Naive thymus-derived CD4-positive, alpha-beta T cell (primary cell): ENCODE measurements at regions of chr11 and their contacts with region 1.

Region 1: GRCh38 chr11:76444384-76445123 is at the start of gene EMSY:
- DNase-seq: peak; percentile 73 to 95 (median 92)
- ATAC-seq: peak; percentile 96
- H3K4me3 ChIP-seq: peak within 1 kb of the TSS; percentile 95
- H3K4me3 Mint-ChIP-seq: peak within 1 kb of the TSS; percentile 91 to 99 (median 96)
- H3K27ac ChIP-seq: peak within 1 kb of the TSS; percentile 92
- H3K27ac Mint-ChIP-seq: peak within 1 kb of the TSS; percentile 91 to 98 (median 97)
- H3K4me1 ChIP-seq: peaks cover 12 to 19% of the 10 kb centered on the region in 2 donors
- H3K4me1 Mint-ChIP-seq: peaks cover 29 to 58% (median 44%) of the 10 kb centered on the region in 7 donors
- H3K27me3 ChIP-seq: no peaks in the 10 kb centered on the region
- H3K27me3 Mint-ChIP-seq: no peaks in the 10 kb centered on the region
- total RNA-seq, gene EMSY: 35.5 to 49.0 (median 40.0) TPM

Region 2: GRCh38 chr11:74592441-74593362 is 1851.9 kb before region 1 on chr11 and contains the start of gene POLD3:
- CTCF ChIA-PET with region 1: no interaction called
- POLR2A ChIA-PET with region 1: no interaction called
- intact Hi-C with region 1: loop called in 1 of 2 experiments (anchors 10 kb)
- DNase-seq: peak; percentile 83 to 97 (median 94)
- ATAC-seq: peak; percentile 99
- H3K4me3 ChIP-seq: peak within 1 kb of the TSS; percentile 98
- H3K4me3 Mint-ChIP-seq: peak within 1 kb of the TSS; percentile 90 to 100 (median 92)
- H3K27ac ChIP-seq: peak within 1 kb of the TSS; percentile 96
- H3K27ac Mint-ChIP-seq: peak within 1 kb of the TSS; percentile 90 to 99 (median 95)
- H3K4me1 ChIP-seq: peaks cover 9% of the 10 kb centered on the region in 2 donors
- H3K4me1 Mint-ChIP-seq: peaks cover 7 to 33% (median 27%) of the 10 kb centered on the region in 7 donors
- H3K27me3 ChIP-seq: no peaks in the 10 kb centered on the region
- H3K27me3 Mint-ChIP-seq: peaks cover 0 to 5% (median 0%) of the 10 kb centered on the region in 5 donors
- total RNA-seq, gene POLD3: 8.0 to 40.8 (median 14.7) TPM

Region 3: DNA sequence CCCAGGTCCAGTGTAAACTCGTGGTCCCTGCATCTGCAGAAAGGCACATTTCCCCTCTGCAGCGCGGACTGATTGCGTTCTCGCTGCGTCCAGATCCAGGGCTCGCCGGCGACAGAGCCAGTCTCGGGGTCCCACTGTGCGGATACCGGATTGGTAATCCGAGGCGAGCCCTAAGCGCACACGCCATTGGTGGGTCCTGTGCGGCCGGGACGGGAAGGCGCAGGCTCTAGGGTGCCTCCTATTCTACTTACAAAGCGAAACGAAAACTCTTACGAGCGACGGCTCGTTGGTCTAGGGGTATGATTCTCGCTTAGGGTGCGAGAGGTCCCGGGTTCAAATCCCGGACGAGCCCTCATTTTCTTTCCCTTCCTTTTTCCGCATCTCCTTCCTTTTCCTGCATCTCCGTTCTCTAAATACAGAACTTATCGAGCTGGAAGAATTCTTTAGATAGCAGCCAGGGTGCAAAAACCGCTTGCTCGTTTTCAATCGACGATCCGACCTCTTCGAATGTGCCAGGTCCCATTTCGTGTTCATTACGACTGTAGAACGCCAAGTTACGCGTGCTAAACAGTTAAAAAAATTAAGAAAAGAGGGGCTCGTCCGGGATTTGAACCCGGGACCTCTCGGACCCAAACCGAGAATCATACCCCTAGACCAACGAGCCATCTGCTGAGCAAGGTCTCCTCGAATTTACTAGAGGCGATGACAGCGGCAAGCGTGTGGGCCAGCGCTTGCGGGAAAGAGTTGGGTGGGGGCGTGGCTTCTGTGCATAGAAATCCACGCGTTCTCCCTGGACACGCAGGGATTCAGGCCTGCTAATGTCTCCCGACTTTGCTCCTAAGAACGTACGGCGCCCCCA is 209.1 kb before region 1 on chr11:
- CTCF ChIA-PET with region 1: no interaction called
- POLR2A ChIA-PET with region 1: no interaction called
- intact Hi-C with region 1: loop called (anchors 1 to 2 kb)
- DNase-seq: peak; percentile 79 to 95 (median 92)
- ATAC-seq: peak; percentile 87
- H3K4me3 ChIP-seq: peak overlapping the region; percentile 98
- H3K4me3 Mint-ChIP-seq: peak overlapping the region; percentile 82 to 94 (median 91)
- H3K27ac ChIP-seq: peak overlapping the region; percentile 57
- H3K27ac Mint-ChIP-seq: peak overlapping the region; percentile 89 to 99 (median 96)
- H3K4me1 ChIP-seq: peaks cover 26 to 40% of the 10 kb centered on the region in 2 donors
- H3K4me1 Mint-ChIP-seq: peaks cover 16 to 65% (median 55%) of the 10 kb centered on the region in 7 donors
- H3K27me3 ChIP-seq: no peaks in the 10 kb centered on the region
- H3K27me3 Mint-ChIP-seq: peaks cover 0 to 30% (median 0%) of the 10 kb centered on the region in 5 donors

Region 4: DNA sequence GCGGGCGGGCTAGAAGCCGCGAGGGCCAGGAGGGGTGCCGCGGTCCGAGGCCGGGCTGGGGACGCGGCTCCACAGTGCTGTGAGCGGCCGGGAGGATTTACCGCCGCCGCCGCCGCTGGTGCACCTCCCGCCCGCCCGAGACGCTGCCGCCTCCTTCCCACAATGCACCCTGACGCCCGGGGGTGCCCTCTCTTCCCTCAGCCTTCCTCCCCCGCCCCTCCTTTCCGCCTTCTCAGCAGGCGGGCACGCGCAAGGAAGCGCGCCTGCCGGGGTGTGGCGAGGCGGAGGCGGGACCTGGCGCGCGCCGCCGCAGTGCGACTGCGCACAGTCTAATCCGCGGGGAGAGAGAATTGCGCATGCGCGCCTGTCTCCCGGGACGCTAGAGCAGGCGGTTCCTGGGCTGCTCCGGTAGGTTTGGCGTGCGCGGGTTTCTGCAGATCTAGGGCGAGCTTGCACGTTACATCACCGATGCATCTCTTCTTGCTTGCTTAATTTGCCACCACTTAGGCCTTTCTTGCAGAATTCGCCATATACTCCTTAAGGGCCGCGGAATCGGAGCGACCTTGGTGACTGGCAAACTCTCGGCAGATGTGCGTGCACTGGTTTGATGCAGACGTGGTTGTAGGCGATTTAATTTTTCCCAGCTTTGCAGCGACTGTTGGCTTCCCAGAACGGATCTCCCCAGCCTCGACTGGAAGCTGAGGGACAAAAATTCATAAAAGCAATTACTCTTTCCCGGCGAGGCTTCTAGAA is 63.4 kb before region 1 on chr11 and contains the starts of genes GVQW3 and THAP12:
- CTCF ChIA-PET with region 1: no interaction called
- POLR2A ChIA-PET with region 1: interaction called, 8 read pairs
- intact Hi-C with region 1: loop called (anchors 1 kb)
- DNase-seq: peak; percentile 96 to 99 (median 98)
- ATAC-seq: peak; percentile 96
- H3K4me3 ChIP-seq: peak within 1 kb of the TSS; percentile 86
- H3K4me3 Mint-ChIP-seq: peak within 1 kb of the TSS; percentile 92 to 98 (median 97)
- H3K27ac ChIP-seq: peak within 1 kb of the TSS; percentile 72
- H3K27ac Mint-ChIP-seq: peak within 1 kb of the TSS; percentile 75 to 98 (median 92)
- H3K4me1 ChIP-seq: peaks cover 22 to 43% of the 10 kb centered on the region in 2 donors
- H3K4me1 Mint-ChIP-seq: peaks cover 51 to 76% (median 69%) of the 10 kb centered on the region in 7 donors
- H3K27me3 ChIP-seq: no peaks in the 10 kb centered on the region
- H3K27me3 Mint-ChIP-seq: no peaks in the 10 kb centered on the region
- total RNA-seq, gene GVQW3: 3.6 to 9.1 (median 6.7) TPM
- total RNA-seq, gene THAP12: 40.3 to 57.9 (median 51.1) TPM

Region 5: GRCh38 chr11:76680518-76681425 is 236.2 kb after region 1 on chr11:
- CTCF ChIA-PET with region 1: no interaction called
- POLR2A ChIA-PET with region 1: no interaction called
- intact Hi-C with region 1: loop called in 1 of 2 experiments (anchors 2 kb)
- DNase-seq: peak in 7 of 9 donors; percentile 21 to 65 (median 38)
- ATAC-seq: peak; percentile 70
- H3K4me3 ChIP-seq: no peak overlapping the region
- H3K4me3 Mint-ChIP-seq: no peak overlapping the region
- H3K27ac ChIP-seq: no peak overlapping the region
- H3K27ac Mint-ChIP-seq: no peak overlapping the region
- H3K4me1 ChIP-seq: peaks cover 0 to 2% of the 10 kb centered on the region in 2 donors
- H3K4me1 Mint-ChIP-seq: peaks cover 0 to 28% (median under 1%) of the 10 kb centered on the region in 7 donors
- H3K27me3 ChIP-seq: no peaks in the 10 kb centered on the region
- H3K27me3 Mint-ChIP-seq: peaks cover 3 to 35% (median 20%) of the 10 kb centered on the region in 5 donors

Region 6: DNA sequence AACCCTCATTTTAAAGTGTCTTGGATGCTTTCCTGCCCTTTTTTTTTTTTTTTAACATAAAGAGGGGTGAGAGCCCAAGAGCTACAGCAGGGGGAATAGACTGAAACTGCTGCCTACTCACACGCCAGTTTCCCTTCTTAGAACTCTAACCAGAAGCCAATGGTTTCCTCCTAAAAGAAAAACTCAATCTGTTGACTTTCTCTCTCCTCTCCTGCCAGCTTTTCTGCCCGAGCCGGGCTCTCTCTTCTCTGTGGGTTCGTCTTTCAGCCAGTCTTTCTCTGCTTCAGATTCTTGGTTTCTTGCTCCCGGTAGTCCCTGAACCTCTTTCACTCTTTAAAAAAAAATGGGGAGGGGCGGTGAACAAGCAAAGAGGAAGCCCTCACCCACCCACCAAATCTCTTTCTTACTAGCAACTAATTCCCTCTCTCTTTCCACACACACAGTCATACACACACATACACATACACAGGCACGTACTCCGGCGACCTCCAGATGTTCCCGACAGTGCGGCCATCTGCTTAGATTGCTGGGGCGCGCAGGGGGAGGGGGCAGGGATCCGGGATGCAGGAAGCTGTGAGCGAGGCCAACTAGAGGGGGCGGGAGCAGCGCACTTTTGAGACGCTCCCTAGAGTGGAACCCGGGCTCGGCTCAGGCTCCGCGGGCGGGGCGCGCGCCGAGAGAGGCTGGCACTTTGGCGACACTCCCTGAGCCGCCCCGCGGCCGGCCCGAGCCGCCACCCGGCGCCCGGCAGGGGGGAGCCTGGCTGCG is 338.2 kb after region 1 on chr11:
- CTCF ChIA-PET with region 1: no interaction called
- POLR2A ChIA-PET with region 1: no interaction called
- intact Hi-C with region 1: loop called in 1 of 2 experiments (anchors 10 kb)
- DNase-seq: peak in 2 of 9 donors; percentile 7 to 64
- ATAC-seq: peak; percentile 44
- H3K4me3 ChIP-seq: peak overlapping the region; percentile 37
- H3K4me3 Mint-ChIP-seq: peak overlapping the region; percentile 66 to 93 (median 82)
- H3K27ac ChIP-seq: no peak overlapping the region
- H3K27ac Mint-ChIP-seq: peak overlapping the region in 1 of 9 donors; percentile 85
- H3K4me1 ChIP-seq: peaks cover 0 to 4% of the 10 kb centered on the region in 2 donors
- H3K4me1 Mint-ChIP-seq: peaks cover 4 to 16% (median 8%) of the 10 kb centered on the region in 7 donors
- H3K27me3 ChIP-seq: peaks cover 4 to 8% of the 10 kb centered on the region in 2 donors
- H3K27me3 Mint-ChIP-seq: peaks cover 46 to 70% (median 51%) of the 10 kb centered on the region in 5 donors

Region 7: DNA sequence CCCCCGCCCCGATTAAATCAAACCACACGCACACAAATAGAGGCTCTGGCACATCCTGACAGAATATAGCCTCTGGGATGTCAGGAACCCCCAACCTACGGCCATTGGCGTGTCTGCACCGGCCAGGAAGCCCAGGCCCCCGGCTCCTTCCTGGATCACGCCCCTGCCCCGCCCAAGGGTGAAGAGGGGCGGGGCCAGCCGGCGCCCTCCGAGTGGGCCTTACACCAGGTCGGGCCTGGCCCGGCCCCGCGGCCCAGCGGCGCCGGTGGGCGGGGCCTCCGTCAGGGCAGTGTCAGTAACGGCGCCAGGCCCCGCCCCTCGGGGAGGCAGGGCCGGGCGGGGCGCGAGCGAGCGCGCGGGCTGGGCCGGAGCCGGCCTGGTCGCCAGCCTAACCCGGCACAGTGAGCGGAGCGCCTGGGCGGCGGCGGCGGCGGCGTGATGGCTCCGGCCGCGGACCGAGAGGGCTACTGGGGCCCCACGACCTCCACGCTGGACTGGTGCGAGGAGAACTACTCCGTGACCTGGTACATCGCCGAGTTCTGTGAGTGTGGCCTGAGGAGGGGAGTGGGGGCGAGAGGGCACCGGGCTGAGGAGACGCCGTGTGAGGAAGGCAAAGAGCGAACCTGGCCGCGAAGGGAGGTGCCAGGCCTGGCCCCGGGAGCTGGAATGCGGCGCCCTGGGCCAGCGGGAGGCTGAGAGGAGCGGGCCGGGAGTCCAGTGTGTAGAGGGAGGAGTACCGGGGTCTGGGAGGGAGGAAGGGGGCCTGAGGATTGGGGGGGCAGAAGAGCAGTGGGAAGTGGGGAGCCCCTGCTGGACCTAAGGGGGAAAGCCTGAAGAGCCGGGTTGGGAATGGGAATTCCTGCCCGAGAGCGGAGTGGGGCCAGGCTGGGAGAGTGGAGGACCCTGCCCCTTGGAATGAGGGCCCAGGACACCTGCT is 416.3 kb after region 1 on chr11 and contains the start of gene ACER3:
- CTCF ChIA-PET with region 1: no interaction called
- POLR2A ChIA-PET with region 1: no interaction called
- intact Hi-C with region 1: loop called in 1 of 2 experiments (anchors 2 kb)
- DNase-seq: peak; percentile 36 to 95 (median 61)
- ATAC-seq: peak; percentile 98
- H3K4me3 ChIP-seq: peak within 1 kb of the TSS; percentile 57
- H3K4me3 Mint-ChIP-seq: peak within 1 kb of the TSS; percentile 80 to 92 (median 88)
- H3K27ac ChIP-seq: peak within 1 kb of the TSS; percentile 72
- H3K27ac Mint-ChIP-seq: peak within 1 kb of the TSS; percentile 73 to 95 (median 85)
- H3K4me1 ChIP-seq: peaks cover 9 to 11% of the 10 kb centered on the region in 2 donors
- H3K4me1 Mint-ChIP-seq: peaks cover 19 to 36% (median 28%) of the 10 kb centered on the region in 7 donors
- H3K27me3 ChIP-seq: no peaks in the 10 kb centered on the region
- H3K27me3 Mint-ChIP-seq: no peaks in the 10 kb centered on the region
- total RNA-seq, gene ACER3: 4.7 to 15.2 (median 9.0) TPM